Activated CD8-positive, alpha-beta T cell treated with anti-CD3 and anti-CD28 coated beads, Interleukin-2, amount 10 ng/mL, durations not matched to agents 7 days and 5 days (primary cell): ENCODE measurements at regions of chr11 and their contacts with region 1.

Region 1: GRCh38 chr11:36500315-36500721 is 9.8 kb downstream of the TRAF6 start:
- DNase-seq: no peak
- ATAC-seq: no peak
- H3K4me3 Mint-ChIP-seq: no peak overlapping the region
- H3K27ac Mint-ChIP-seq: no peak overlapping the region
- H3K4me1 Mint-ChIP-seq: peaks cover 26% of the 10 kb centered on the region
- H3K27me3 Mint-ChIP-seq: no peaks in the 10 kb centered on the region

Region 2: GRCh38 chr11:36354221-36355003 is 145.9 kb before region 1 on chr11:
- CTCF ChIA-PET with region 1: interaction called, 11 read pairs
- POLR2A ChIA-PET with region 1: no interaction called
- DNase-seq: no peak
- ATAC-seq: peak; percentile 29
- H3K4me3 Mint-ChIP-seq: no peak overlapping the region
- H3K27ac Mint-ChIP-seq: no peak overlapping the region
- H3K4me1 Mint-ChIP-seq: peaks cover 43% of the 10 kb centered on the region
- H3K27me3 Mint-ChIP-seq: peaks cover 24% of the 10 kb centered on the region